ENCODE measurements at regions of chr9 and their contacts with region 1.

Region 1: DNA sequence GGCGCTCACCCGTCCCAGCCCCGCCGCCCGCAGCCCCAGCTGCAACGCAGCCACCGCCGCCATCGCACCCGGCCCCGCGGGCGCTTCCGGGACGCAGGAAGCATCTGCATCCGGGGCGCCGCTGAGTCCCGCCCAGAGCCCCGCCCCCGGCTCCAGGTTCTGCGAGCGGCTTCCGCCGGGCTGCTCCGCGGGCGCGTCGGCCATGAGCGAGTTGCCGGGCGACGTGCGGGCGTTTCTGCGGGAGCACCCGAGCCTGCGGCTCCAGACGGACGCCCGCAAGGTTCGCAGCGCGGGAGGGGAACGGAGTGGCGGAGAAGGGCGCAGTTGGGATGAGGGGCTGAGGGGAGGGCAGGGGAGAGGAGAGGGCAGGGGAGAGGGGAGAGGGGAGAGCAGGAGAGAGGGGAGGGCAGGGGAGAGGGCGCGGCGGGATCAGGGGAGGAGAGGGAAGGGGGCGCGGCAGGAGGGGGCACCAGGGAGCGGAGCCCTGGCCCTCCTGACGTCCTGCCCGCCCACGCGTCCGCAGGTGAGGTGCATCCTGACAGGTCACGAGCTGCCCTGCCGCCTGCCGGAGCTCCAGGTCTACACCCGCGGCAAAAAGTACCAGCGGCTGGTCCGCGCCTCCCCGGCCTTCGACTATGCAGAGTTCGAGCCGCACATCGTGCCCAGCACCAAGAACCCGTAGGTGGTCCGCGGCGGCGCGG is at the starts of genes SURF1 and SURF2:
- DNase-seq: peak; percentile 93
- H3K4me3 ChIP-seq: peak within 1 kb of the TSS; percentile 93
- H3K27ac ChIP-seq: peak within 1 kb of the TSS; percentile 76
- H3K4me1 ChIP-seq: peaks cover 19% of the 10 kb centered on the region
- H3K27me3 ChIP-seq: no peaks in the 10 kb centered on the region
- CTCF ChIP-seq: no peak
- total RNA-seq, gene SURF1: 41.6 and 53.3 TPM in 2 replicates
- total RNA-seq, gene SURF2: 35.0 and 42.0 TPM in 2 replicates

Region 2: GRCh38 chr9:133309608-133310007 is 46.9 kb before region 1 on chr9:
- CTCF ChIA-PET with region 1: interaction called, 10 read pairs
- POLR2A ChIA-PET with region 1: no interaction called
- intact Hi-C with region 1: no loop called
- DNase-seq: no peak
- H3K4me3 ChIP-seq: no peak overlapping the region
- H3K27ac ChIP-seq: no peak overlapping the region
- H3K4me1 ChIP-seq: no peaks in the 10 kb centered on the region
- H3K27me3 ChIP-seq: no peaks in the 10 kb centered on the region
- CTCF ChIP-seq: no peak